Endothelial cell of umbilical vein (primary cell): ENCODE measurements at regions of chr14 and their contacts with region 1.

Region 1: DNA sequence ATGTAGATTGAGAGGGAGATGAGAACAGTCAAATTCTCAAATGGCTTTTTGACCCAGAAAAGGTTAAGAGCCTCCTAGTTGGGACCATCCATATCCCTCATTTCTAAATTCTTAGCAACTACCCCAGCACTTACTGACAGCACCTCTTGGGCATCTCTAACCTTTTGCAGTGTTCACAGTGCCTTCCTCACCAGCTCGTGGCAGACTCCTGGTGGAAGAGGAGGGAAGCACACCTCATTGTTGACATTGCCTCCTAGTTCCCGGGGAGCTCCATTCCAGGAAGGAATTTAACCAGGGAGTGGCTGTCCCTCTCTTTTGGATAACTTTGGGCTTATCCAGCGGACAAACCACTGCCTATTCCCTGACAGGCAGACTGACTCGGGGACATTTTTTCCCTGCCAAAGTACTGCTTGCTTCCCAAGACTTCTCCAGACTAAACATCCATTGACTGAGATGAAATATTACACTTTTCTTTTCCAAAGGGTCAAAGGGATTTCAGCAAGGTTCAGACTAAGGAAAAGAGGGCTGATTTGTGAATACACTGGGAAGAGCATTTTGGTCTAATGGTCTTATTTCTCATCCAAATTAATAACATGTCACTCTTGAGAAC is 9.0 kb upstream of the OR6J1 start:
- DNase-seq: peak; percentile 75
- H3K4me3 ChIP-seq: no peak overlapping the region
- H3K27ac ChIP-seq: peak overlapping the region; percentile 29
- H3K4me1 ChIP-seq: peaks cover 19% of the 10 kb centered on the region
- H3K27me3 ChIP-seq: no peaks in the 10 kb centered on the region
- CTCF ChIP-seq: peak; percentile 89 to 95
- POLR2A ChIP-seq: no peak

Region 2: GRCh38 chr14:22556990-22557623 is 96.0 kb before region 1 on chr14:
- CTCF ChIA-PET with region 1: interaction called, 28 read pairs
- POLR2A ChIA-PET with region 1: no interaction called
- dilution Hi-C with region 1: no loop called
- intact Hi-C with region 1: loop called (anchors 1 kb)
- DNase-seq: peak; percentile 71
- H3K4me3 ChIP-seq: peak overlapping the region in 2 of 3 experiments; percentile 10 to 14
- H3K27ac ChIP-seq: peak overlapping the region; percentile 88
- H3K4me1 ChIP-seq: peaks cover 52% of the 10 kb centered on the region
- H3K27me3 ChIP-seq: no peaks in the 10 kb centered on the region
- CTCF ChIP-seq: peak; percentile 84 to 99
- POLR2A ChIP-seq: no peak

Region 3: DNA sequence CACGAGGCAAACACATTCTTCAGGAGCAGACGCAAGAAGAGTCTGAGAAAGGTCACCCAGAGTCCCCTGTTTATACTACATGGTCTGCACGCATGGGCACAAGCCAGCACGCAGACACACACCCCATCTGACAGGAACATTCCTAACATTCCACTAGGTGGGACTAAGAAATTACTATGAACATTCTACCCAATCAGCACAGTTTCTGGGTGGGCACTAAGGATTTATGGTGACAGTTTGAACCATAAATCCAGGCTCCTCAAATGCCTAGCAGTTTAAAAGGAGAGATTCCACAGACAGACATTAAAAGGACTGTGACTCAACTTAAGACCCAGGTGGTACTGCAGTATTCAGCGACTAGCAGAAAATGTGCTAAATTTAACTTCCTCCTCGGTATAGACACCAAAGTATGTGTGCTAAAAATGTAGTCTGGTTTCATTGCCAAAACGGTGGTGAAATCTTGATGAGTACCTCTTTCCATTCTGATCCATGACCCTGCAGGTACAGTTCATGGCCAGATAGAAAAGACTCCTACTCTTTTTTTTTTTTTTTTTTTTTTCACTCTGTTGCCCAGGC is 38.8 kb before region 1 on chr14:
- CTCF ChIA-PET with region 1: interaction called, 8 read pairs
- POLR2A ChIA-PET with region 1: no interaction called
- dilution Hi-C with region 1: no loop called
- intact Hi-C with region 1: loop called (anchors 1 kb)
- DNase-seq: peak; percentile 99
- H3K4me3 ChIP-seq: no peak overlapping the region
- H3K27ac ChIP-seq: peak overlapping the region; percentile 91
- H3K4me1 ChIP-seq: peaks cover 20% of the 10 kb centered on the region
- H3K27me3 ChIP-seq: no peaks in the 10 kb centered on the region
- CTCF ChIP-seq: no peak
- POLR2A ChIP-seq: peak; percentile 56

Region 4: DNA sequence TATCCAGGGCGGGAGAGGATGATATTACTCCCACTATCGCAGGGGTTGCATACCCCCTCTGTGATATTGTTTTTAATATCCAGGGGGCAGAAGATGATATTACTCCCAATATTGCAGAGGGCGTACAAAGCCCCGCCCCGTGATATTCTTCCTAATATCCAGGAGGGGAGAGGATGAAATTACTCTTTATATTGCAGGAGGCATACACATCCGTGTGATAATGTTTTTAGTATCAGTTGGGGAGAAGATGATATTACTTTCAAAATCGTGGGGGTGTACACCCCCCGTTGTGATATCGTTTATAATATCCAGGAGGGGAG is 60.5 kb after region 1 on chr14:
- CTCF ChIA-PET with region 1: interaction called, 28 read pairs
- POLR2A ChIA-PET with region 1: no interaction called
- dilution Hi-C with region 1: no loop called
- intact Hi-C with region 1: loop called (anchors 1 kb)
- DNase-seq: no peak
- H3K4me3 ChIP-seq: peak overlapping the region in 1 of 3 experiments; percentile 13
- H3K27ac ChIP-seq: peak overlapping the region; percentile 28
- H3K4me1 ChIP-seq: peaks cover 23% of the 10 kb centered on the region
- H3K27me3 ChIP-seq: no peaks in the 10 kb centered on the region
- CTCF ChIP-seq: no peak
- POLR2A ChIP-seq: no peak

Region 5: DNA sequence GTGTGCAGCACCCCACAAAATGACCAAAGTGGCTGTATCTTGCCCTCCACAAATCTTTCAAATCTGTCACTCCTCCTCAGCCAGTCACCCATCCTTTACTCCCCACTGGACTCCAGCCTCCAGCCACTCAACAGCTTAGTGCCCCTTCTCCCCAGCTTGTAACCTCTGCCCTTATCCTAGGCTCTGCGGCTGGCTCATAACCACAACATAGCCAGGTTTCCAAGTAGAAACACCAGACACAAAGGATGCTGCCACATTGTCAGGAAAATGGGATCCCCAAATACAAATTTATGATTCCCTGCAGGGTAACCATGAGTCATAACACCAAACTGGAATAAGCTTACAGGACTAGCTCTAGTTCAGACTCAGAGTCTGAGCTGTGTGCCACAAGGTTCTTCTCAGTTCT is 128.5 kb after region 1 on chr14:
- CTCF ChIA-PET with region 1: interaction called, 15 read pairs
- POLR2A ChIA-PET with region 1: no interaction called
- dilution Hi-C with region 1: no loop called
- intact Hi-C with region 1: no loop called
- DNase-seq: no peak
- H3K4me3 ChIP-seq: no peak overlapping the region
- H3K27ac ChIP-seq: no peak overlapping the region
- H3K4me1 ChIP-seq: peaks cover 2% of the 10 kb centered on the region
- H3K27me3 ChIP-seq: no peaks in the 10 kb centered on the region
- CTCF ChIP-seq: no peak
- POLR2A ChIP-seq: no peak

Region 6: DNA sequence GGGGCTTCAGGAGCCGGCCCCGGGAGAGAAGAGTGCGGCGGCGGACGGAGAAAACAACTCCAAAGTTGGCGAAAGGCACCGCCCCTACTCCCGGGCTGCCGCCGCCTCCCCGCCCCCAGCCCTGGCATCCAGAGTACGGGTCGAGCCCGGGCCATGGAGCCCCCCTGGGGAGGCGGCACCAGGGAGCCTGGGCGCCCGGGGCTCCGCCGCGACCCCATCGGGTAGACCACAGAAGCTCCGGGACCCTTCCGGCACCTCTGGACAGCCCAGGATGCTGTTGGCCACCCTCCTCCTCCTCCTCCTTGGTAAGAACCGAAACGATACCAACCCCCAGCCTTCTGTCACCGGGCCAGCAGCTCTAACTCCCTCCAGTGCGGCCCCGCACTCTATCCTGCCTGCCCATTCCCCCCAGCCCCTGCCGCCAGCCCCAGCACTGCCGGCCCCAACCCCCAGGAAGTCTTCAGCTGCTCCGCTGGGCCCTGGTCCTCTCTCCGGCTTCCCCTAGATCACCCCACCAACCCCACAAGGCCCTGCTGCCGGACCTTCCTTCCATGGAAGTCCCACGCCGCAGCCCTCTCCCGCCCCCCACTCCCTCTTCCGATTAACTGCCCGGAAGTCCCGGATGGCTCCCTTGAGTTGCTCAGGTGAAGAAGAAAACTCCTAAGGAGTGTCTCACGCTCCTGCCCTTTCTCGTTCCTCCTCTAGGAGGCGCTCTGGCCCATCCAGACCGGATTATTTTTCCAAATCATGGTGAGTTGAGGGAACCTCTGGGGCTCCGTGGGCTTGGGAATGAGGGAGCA is 219.1 kb after region 1 on chr14:
- CTCF ChIA-PET with region 1: interaction called, 10 read pairs
- POLR2A ChIA-PET with region 1: no interaction called
- dilution Hi-C with region 1: no loop called
- intact Hi-C with region 1: no loop called
- DNase-seq: peak; percentile 87
- H3K4me3 ChIP-seq: peak overlapping the region; percentile 68 to 78 (median 76)
- H3K27ac ChIP-seq: peak overlapping the region; percentile 89
- H3K4me1 ChIP-seq: peaks cover 18% of the 10 kb centered on the region
- H3K27me3 ChIP-seq: no peaks in the 10 kb centered on the region
- CTCF ChIP-seq: peak; percentile 90 to 97
- POLR2A ChIP-seq: peak; percentile 59